BJ (cell line): ENCODE measurements at regions of chr1 and their contacts with region 1.

Region 1: GRCh38 chr1:170200621-170201397 is 55.0 kb downstream of the NTMT2 start:
- DNase-seq: no peak
- H3K4me3 ChIP-seq: no peak overlapping the region
- H3K27me3 ChIP-seq: no peaks in the 10 kb centered on the region
- CTCF ChIP-seq: no peak

Region 2: GRCh38 chr1:170114906-170115305 is 85.9 kb before region 1 on chr1:
- CTCF ChIA-PET with region 1: no interaction called
- POLR2A ChIA-PET with region 1: interaction called, 22 read pairs
- DNase-seq: no peak
- H3K4me3 ChIP-seq: no peak overlapping the region
- H3K27me3 ChIP-seq: no peaks in the 10 kb centered on the region
- CTCF ChIP-seq: no peak